ENCODE measurements at regions of chr3 and their contacts with region 1.

Region 1: GRCh38 chr3:143674100-143674968 is 173.9 kb downstream of the SLC9A9 start:
- DNase-seq: peak; percentile 66
- ATAC-seq: peak; percentile 94
- H3K4me3 Mint-ChIP-seq: no peak overlapping the region
- H3K27ac Mint-ChIP-seq: no peak overlapping the region
- H3K4me1 Mint-ChIP-seq: peaks cover 10% of the 10 kb centered on the region
- H3K27me3 Mint-ChIP-seq: no peaks in the 10 kb centered on the region
- CTCF ChIP-seq: peak; percentile 92

Region 2: DNA sequence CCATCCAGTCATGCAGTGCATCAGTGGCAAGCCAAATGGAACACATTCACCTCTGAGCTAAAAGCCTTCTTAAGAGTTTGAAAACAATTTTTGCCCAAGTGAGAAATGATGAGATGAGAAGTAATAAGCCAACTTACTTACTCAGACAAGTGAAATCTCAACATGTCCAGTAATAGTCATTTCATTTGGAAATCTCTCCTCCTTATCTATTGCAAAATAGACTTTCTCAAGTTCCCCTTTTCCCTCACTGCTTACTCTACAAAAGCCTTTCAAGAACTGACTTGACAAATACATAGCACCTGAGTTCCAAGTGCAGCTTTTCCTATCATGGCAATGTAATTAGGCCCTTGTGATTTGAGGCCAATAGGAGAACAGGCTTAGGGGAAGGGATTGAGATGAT is 108.4 kb before region 1 on chr3:
- CTCF ChIA-PET with region 1: no interaction called
- POLR2A ChIA-PET with region 1: no interaction called
- DNase-seq: no peak
- ATAC-seq: no peak
- H3K4me3 Mint-ChIP-seq: no peak overlapping the region
- H3K27ac Mint-ChIP-seq: no peak overlapping the region
- H3K4me1 Mint-ChIP-seq: peaks cover 6% of the 10 kb centered on the region
- H3K27me3 Mint-ChIP-seq: no peaks in the 10 kb centered on the region
- CTCF ChIP-seq: no peak

Region 3: GRCh38 chr3:143644370-143645089 is 29.8 kb before region 1 on chr3:
- CTCF ChIA-PET with region 1: interaction called, 14 read pairs
- POLR2A ChIA-PET with region 1: no interaction called
- DNase-seq: peak; percentile 55
- ATAC-seq: peak; percentile 94
- H3K4me3 Mint-ChIP-seq: no peak overlapping the region
- H3K27ac Mint-ChIP-seq: no peak overlapping the region
- H3K4me1 Mint-ChIP-seq: peaks cover 12% of the 10 kb centered on the region
- H3K27me3 Mint-ChIP-seq: no peaks in the 10 kb centered on the region
- CTCF ChIP-seq: peak; percentile 60

Region 4: DNA sequence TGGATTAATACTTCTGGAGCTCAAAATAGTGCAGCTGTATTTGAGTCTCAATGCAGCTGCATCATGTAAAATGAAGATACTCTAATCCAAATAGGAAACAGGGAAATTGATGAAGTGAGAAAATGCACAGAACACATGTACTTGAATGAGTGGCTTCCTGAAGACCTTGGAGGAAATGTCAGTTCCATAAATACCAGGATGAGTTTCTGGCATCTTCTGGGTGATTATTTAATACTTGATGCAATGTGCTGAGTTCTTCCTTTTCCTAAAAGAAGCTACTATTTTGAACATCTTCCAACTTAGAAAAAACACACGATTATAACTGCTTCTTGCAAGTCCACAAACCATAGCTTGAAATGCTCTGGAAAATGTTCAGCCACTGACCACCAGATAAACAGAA is 11.2 kb after region 1 on chr3:
- CTCF ChIA-PET with region 1: interaction called, 13 read pairs
- POLR2A ChIA-PET with region 1: no interaction called
- DNase-seq: no peak
- ATAC-seq: no peak
- H3K4me3 Mint-ChIP-seq: no peak overlapping the region
- H3K27ac Mint-ChIP-seq: no peak overlapping the region
- H3K4me1 Mint-ChIP-seq: 0 out of 2 replicates have a peak, but pooled peaks cover 5% of the 10 kb centered on the region
- H3K27me3 Mint-ChIP-seq: no peaks in the 10 kb centered on the region
- CTCF ChIP-seq: no peak

Region 5: DNA sequence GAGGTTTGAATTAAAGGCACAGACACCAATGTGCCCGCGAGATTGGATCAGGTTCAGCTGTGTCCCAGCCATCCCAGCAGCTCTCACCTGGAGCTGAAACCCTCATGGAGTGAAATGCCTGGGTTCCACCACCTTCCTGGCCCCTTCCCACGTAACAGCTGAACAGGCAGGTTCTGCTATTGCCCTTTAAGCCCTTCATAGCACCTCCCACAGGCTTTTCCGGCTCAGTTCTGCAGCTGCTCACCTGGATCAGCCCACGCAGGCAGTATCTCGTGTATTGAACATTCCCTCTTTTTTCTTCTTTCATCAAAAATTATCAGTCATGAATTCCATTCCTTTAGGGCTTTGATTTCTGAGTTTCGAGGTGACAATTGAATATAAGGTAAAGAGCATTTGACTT is 44.1 kb after region 1 on chr3:
- CTCF ChIA-PET with region 1: no interaction called
- POLR2A ChIA-PET with region 1: no interaction called
- DNase-seq: peak; percentile 18
- ATAC-seq: peak; percentile 74
- H3K4me3 Mint-ChIP-seq: no peak overlapping the region
- H3K27ac Mint-ChIP-seq: no peak overlapping the region
- H3K4me1 Mint-ChIP-seq: peaks cover 2% of the 10 kb centered on the region
- H3K27me3 Mint-ChIP-seq: no peaks in the 10 kb centered on the region
- CTCF ChIP-seq: no peak

Region 6: GRCh38 chr3:143731776-143732175 is 57.4 kb after region 1 on chr3:
- CTCF ChIA-PET with region 1: no interaction called
- POLR2A ChIA-PET with region 1: no interaction called
- DNase-seq: no peak
- ATAC-seq: no peak
- H3K4me3 Mint-ChIP-seq: no peak overlapping the region
- H3K27ac Mint-ChIP-seq: no peak overlapping the region
- H3K4me1 Mint-ChIP-seq: no peaks in the 10 kb centered on the region
- H3K27me3 Mint-ChIP-seq: no peaks in the 10 kb centered on the region
- CTCF ChIP-seq: no peak

Region 7: DNA sequence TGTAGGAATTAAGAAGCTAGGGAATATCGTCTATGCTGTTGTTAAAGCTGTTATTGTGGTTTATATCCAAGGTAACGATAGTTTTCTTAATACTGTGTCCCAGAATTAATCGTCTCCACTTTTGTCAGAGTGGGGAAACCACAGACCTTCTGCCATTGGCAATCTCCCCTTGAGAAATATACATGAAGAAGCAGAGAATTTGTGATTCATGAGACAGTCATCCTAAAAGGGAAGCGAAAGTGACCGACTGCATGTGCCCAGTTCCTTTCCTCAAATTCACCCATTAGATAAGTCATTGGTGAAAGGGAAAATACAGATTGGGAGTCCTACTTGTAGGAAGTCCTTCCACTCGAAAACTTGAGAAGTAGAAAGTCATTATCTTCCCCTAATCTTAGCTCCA is 323.9 kb after region 1 on chr3:
- CTCF ChIA-PET with region 1: no interaction called
- POLR2A ChIA-PET with region 1: no interaction called
- DNase-seq: no peak
- ATAC-seq: no peak
- H3K4me3 Mint-ChIP-seq: no peak overlapping the region
- H3K27ac Mint-ChIP-seq: no peak overlapping the region
- H3K4me1 Mint-ChIP-seq: peaks cover 4% of the 10 kb centered on the region
- H3K27me3 Mint-ChIP-seq: no peaks in the 10 kb centered on the region
- CTCF ChIP-seq: no peak

Measured in WTC11 (cell line).